ENCODE measurements at regions of chr2 and their contacts with region 1.

Region 1: DNA sequence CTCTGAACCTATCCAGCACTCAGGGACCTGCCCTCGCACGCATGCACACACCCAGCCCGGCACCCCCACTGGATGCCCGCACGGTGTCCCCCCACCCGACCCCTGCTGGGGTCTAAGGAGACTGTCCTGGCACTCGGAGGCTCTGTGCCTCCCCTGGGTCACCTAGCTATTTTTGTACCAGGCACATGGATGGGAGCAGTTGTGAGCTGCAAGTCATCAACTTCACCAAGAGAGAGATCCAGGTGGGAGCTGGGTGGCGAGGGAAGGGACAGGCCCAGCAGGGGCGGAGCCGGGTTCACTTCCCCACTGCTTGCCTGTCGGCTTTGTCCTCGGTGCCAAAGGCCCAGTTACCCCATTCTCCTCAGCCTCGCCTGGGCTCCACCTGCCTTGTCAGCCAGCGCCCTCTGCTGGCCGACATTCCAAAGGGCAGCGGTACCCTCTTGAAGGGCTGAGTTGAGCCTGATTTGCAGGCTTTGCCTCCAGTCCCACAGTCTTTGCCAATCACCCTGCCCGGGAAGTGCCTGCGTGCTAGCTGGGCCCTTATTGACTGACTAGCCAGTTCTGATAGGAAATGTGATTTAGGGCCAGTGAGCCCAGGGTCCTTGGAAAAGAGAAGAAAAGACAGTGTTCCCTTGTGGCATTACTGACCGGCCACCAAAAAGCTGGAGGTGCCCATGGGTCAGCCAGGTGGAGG is 5.8 kb downstream of the NT5DC4 start:
- DNase-seq: peak; percentile 64
- H3K4me3 ChIP-seq: no peak overlapping the region
- CTCF ChIP-seq: peak; percentile 97

Region 2: DNA sequence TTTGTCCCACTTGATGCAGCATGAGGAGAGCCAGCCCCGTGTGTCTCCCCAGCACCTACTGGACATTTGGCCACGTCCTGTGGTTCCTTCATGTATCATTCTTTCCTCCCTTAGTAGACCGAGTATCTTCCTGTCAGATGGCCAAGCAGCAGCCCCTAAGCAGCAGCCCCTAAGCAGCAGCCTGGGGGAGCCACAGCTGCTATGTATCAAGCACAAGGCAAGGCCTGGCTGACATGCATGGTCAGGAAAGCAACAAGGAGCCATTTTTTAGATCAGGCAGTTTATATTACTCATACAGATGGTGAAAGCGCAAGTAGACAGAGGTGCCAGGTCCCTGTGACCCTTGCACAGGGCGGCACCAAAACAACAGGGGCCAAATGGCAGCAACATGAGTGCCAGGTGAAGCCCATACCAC is 120.1 kb before region 1 on chr2:
- in situ Hi-C with region 1: loop called (anchors 5 kb)
- DNase-seq: no peak
- H3K4me3 ChIP-seq: no peak overlapping the region
- CTCF ChIP-seq: no peak

Region 3: DNA sequence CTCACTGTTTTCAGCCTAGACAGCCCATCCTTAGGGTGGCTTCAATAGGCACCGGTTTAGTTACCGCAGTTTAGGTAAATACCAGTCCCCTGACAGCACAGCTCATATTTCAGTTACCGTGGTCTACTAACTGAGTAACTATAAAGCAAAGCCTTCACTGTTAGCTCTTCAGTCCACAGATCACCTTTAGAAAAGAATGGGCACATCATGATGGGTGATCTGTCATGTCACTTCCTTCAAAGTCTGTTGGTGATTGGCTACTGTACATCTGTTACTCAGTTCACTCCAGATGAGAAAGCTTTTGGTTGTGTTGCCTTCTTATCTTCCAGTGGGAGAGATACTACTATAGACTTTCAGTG is 59.9 kb before region 1 on chr2:
- in situ Hi-C with region 1: loop called (anchors 5 kb)
- DNase-seq: no peak
- H3K4me3 ChIP-seq: no peak overlapping the region
- CTCF ChIP-seq: no peak

Region 4: DNA sequence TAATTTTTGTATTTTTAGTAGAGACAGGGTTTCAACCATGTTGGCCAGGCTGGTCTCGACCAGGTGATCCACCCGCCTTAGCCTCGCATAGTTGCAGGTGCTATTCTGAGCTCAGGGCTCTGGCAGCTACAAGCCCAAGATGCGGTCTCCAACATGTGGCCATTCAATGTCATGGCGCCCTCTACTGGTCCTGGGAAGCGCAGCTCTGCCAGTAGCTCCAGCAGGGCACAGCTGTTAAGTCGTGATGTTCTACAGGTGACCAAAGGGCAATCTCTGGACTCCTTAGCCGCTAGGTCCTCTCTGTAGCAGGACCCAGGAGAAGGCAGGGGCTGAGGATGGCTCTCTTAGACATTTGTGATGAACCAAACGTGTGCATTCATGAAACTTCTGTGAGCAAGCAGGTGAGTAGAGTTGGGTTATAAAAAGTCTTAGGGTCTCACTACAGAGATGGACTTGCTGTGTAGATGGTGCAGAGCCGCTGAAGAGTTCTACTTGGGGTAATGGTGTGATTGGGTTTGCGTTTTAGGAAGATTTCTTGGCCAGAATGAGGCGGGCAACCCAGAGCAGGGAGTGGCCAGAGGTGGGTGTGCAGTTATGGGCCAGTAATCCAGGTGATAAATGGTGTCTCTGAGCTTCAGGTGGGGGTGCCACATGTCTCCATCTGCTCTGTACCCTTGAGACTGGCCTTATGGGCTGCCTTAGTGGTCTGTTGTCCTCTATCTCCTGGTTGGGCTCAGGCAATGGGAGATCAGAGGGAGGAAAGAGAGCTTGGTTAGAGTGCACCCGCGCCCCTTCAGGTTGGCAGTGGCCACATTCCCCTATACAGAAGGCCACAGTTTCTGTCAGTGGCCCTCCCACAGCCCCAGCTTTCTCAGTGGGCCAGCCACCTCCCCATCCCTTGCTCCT is 215.4 kb after region 1 on chr2:
- in situ Hi-C with region 1: loop called (anchors 25 kb)
- DNase-seq: peak; percentile 61
- H3K4me3 ChIP-seq: no peak overlapping the region
- CTCF ChIP-seq: peak; percentile 96